HCT116 (cell line): ENCODE measurements at regions of chr9 and their contacts with region 1.

Region 1: GRCh38 chr9:100222674-100223073 is 123.6 kb downstream of the INVS start:
- DNase-seq: no peak
- ATAC-seq: no peak
- H3K4me3 ChIP-seq: no peak overlapping the region
- H3K27ac ChIP-seq: no peak overlapping the region
- H3K4me1 ChIP-seq: no peaks in the 10 kb centered on the region
- H3K27me3 ChIP-seq: no peaks in the 10 kb centered on the region
- CTCF ChIP-seq: peak; percentile 27 to 57 (median 32); a peak in 4 of 6 replicates
- POLR2A ChIP-seq: no peak
- RAD21 ChIP-seq: peak; percentile 58

Region 2: GRCh38 chr9:99184475-99185347 is 1038.0 kb before region 1 on chr9:
- CTCF ChIA-PET with region 1: no interaction called
- POLR2A ChIA-PET with region 1: no interaction called
- RAD21 ChIA-PET with region 1: no interaction called
- intact Hi-C with region 1: loop called (anchors 10 kb)
- DNase-seq: peak; percentile 74
- ATAC-seq: peak; percentile 94
- H3K4me3 ChIP-seq: no peak overlapping the region
- H3K27ac ChIP-seq: no peak overlapping the region
- H3K4me1 ChIP-seq: peaks cover 0 to 4% of the 10 kb centered on the region in 2 experiments; a peak in 1 of 4 replicates
- H3K27me3 ChIP-seq: peaks cover 6% of the 10 kb centered on the region; the same call in 1 of the 2 replicates
- CTCF ChIP-seq: peak; percentile 66 to 94 (median 91)
- POLR2A ChIP-seq: no peak
- RAD21 ChIP-seq: peak; percentile 88

Region 3: GRCh38 chr9:99266255-99267023 is 956.2 kb before region 1 on chr9:
- CTCF ChIA-PET with region 1: no interaction called
- POLR2A ChIA-PET with region 1: no interaction called
- RAD21 ChIA-PET with region 1: no interaction called
- intact Hi-C with region 1: loop called (anchors 10 kb)
- DNase-seq: peak; percentile 69
- ATAC-seq: peak; percentile 95
- H3K4me3 ChIP-seq: peak overlapping the region in 1 of 2 experiments; percentile 7; a peak in 1 of 4 replicates
- H3K27ac ChIP-seq: no peak overlapping the region
- H3K4me1 ChIP-seq: peaks cover 0 to 15% of the 10 kb centered on the region in 2 experiments; a peak in 2 of 4 replicates
- H3K27me3 ChIP-seq: no peaks in the 10 kb centered on the region
- CTCF ChIP-seq: peak; percentile 76 to 97 (median 89)
- POLR2A ChIP-seq: no peak
- RAD21 ChIP-seq: peak; percentile 93

Region 4: DNA sequence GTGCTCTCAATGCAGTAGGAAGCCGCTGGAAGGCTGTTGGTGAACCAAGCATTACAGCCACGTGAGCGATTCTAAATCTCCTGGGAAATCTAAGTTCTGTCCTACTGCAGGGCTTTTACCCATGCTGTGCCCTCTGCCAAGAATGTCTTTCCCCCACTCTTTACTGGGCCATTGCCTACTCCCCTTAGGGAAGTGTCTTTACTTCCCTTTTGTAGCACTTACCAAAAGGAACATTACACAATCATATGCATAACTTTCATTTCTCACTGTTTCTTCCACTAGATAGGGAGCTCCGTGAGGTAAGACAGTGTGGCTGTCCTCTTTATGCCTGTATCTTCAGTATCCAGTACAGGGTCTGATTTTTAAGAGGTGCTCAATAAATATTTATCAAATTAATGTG is 642.7 kb before region 1 on chr9:
- CTCF ChIA-PET with region 1: no interaction called
- POLR2A ChIA-PET with region 1: no interaction called
- RAD21 ChIA-PET with region 1: no interaction called
- intact Hi-C with region 1: no loop called
- DNase-seq: no peak
- ATAC-seq: no peak
- H3K4me3 ChIP-seq: no peak overlapping the region
- H3K27ac ChIP-seq: no peak overlapping the region
- H3K4me1 ChIP-seq: no peaks in the 10 kb centered on the region
- H3K27me3 ChIP-seq: no peaks in the 10 kb centered on the region
- CTCF ChIP-seq: no peak
- POLR2A ChIP-seq: no peak
- RAD21 ChIP-seq: no peak

Region 5: DNA sequence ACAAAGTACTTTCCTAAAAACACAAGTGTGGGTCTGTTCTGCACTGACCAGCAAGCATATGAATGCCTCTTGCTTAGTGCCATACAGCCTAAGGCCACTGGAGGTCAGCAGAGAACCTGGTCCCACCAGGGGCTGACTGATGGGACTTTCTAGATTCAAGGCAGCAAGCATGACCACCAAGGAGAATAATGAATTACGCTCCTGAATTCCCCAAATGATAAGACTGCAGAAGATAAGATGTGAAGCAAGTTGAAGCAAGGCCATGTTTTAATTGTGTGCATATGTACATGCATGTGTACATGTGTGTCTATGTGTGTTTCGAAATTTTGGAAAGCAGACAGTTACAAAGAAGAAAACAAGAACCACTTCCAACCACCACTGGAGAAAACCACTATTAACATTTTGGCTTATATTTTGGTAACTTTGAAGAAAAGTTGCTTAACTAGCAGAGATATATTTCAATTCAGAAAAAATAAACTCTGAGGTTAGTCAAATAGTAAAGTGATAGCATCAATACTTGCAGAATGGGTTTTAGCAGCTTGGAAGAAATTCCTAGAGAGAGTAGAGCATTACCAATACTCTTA is 194.4 kb before region 1 on chr9:
- CTCF ChIA-PET with region 1: no interaction called
- POLR2A ChIA-PET with region 1: no interaction called
- RAD21 ChIA-PET with region 1: no interaction called
- intact Hi-C with region 1: loop called (anchors 1 kb)
- DNase-seq: peak; percentile 60
- ATAC-seq: peak; percentile 100
- H3K4me3 ChIP-seq: no peak overlapping the region
- H3K27ac ChIP-seq: no peak overlapping the region
- H3K4me1 ChIP-seq: no peaks in the 10 kb centered on the region
- H3K27me3 ChIP-seq: no peaks in the 10 kb centered on the region
- CTCF ChIP-seq: peak; percentile 74 to 96 (median 92)
- POLR2A ChIP-seq: no peak
- RAD21 ChIP-seq: peak; percentile 82